ENCODE measurements at regions of chr10 and their contacts with region 1.

Region 1: DNA sequence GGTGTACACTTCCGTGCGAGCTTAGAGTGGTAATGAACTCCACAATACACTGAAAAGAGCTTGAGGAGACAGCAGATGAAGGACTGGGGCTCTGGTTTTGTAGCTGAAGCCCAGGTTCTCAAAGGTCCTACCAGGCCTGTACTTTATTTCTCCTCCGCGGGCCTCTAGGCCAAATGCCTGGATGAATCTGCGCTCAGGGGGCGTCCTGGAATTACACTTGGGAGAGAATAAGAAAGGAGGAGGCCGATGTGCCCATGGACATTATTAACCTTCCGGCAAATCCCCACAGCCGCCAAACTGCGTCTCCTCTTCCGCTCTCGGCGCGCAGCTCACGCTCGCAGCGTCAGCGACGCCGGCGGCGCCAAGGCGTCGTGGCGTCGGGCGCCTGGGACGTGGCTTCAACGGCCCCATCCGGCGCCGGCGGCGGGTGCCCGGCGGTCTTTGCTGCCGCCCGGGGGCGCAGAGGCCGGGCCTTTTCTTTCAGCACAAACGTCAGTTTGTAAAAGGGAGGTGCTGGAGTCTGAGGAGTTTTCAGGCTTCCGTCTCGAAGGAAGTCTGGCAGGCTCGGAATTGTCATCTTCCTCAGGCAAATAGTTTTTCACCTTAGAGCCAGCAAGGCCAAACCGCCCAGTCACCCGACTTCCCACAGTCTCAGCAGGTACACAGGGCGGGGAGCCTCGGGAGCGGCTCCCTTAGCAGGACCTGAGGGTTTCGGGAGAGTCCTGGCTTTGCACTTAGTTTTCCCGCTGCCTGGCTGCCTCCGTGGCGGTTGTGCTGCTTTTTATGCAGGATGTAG is at the start of gene CCDC7:
- DNase-seq: peak; percentile 83 to 90 (median 88)
- H3K4me3 ChIP-seq: peak within 1 kb of the TSS; percentile 89 to 92
- H3K4me3 Mint-ChIP-seq: peak within 1 kb of the TSS; percentile 91 to 99 (median 96)
- H3K27ac ChIP-seq: peak within 1 kb of the TSS; percentile 81
- H3K27ac Mint-ChIP-seq: peak within 1 kb of the TSS; percentile 97 to 100 (median 98)
- H3K4me1 ChIP-seq: peaks cover 20% of the 10 kb centered on the region
- H3K4me1 Mint-ChIP-seq: peaks cover 8 to 26% (median 16%) of the 10 kb centered on the region in 4 donors
- H3K27me3 ChIP-seq: no peaks in the 10 kb centered on the region
- H3K27me3 Mint-ChIP-seq: no peaks in the 10 kb centered on the region
- total RNA-seq, gene CCDC7: 70.3 to 90.5 TPM

Region 2: DNA sequence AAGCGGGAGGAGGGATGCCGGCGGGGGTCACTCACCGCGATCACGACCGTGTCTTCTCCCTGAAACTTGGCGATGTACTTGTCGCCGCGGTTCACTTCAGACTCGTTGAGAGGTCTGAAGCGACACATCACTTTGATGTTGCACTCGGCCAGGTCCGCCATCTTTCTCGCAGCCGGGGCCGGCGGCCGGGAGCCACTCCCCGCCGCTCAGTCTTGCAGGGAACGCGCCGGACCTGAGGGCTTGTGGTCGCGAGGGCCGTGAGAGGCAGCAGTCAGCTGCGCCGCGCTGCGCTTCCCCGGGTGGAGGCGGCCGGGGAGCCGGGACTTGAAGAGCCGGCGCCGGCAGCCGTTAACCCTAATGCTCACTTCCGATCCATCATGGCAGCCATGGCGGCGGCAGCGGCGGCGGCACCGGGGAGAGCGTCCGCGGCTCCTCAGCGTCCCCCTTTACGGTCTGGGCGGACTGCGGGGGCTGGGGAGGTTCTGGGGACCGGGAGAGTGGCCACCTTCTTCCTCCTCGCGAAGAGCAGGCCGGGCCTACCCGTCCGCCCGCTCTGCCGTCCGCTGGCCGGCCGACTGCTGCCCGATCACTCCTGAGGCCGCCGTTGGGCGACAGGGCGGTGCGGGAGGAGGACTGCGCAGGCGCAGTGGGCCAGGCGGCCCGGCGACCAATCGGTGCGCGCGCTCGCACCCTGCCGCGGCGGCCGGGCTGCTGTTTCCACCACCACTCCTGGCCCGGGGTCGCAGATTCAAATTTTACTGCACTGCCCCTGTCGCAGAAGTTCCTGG is 389.9 kb before region 1 on chr10 and contains the start of gene KIF5B:
- CTCF ChIA-PET with region 1: no interaction called
- POLR2A ChIA-PET with region 1: interaction called, 4 read pairs
- intact Hi-C with region 1: loop called (anchors 10 kb)
- DNase-seq: peak; percentile 81 to 92 (median 88)
- H3K4me3 ChIP-seq: peak within 1 kb of the TSS; percentile 88 to 93
- H3K4me3 Mint-ChIP-seq: peak within 1 kb of the TSS; percentile 95 to 99 (median 98)
- H3K27ac ChIP-seq: peak within 1 kb of the TSS; percentile 81
- H3K27ac Mint-ChIP-seq: peak within 1 kb of the TSS; percentile 94 to 97 (median 95)
- H3K4me1 ChIP-seq: peaks cover 49% of the 10 kb centered on the region
- H3K4me1 Mint-ChIP-seq: peaks cover 30 to 54% (median 44%) of the 10 kb centered on the region in 4 donors
- H3K27me3 ChIP-seq: no peaks in the 10 kb centered on the region
- H3K27me3 Mint-ChIP-seq: no peaks in the 10 kb centered on the region
- total RNA-seq, gene KIF5B: 54.8 to 55.6 TPM

Region 3: GRCh38 chr10:32190890-32191491 is 254.9 kb before region 1 on chr10:
- CTCF ChIA-PET with region 1: no interaction called
- POLR2A ChIA-PET with region 1: no interaction called
- intact Hi-C with region 1: loop called (anchors 2 kb)
- DNase-seq: peak in 4 of 5 donors; percentile 31 to 44 (median 40)
- H3K4me3 ChIP-seq: no peak overlapping the region
- H3K4me3 Mint-ChIP-seq: no peak overlapping the region
- H3K27ac ChIP-seq: no peak overlapping the region
- H3K27ac Mint-ChIP-seq: peak overlapping the region in 4 of 7 donors; percentile 5 to 59 (median 50)
- H3K4me1 ChIP-seq: no peaks in the 10 kb centered on the region
- H3K4me1 Mint-ChIP-seq: peaks cover 0 to 6% (median 3%) of the 10 kb centered on the region in 4 donors
- H3K27me3 ChIP-seq: no peaks in the 10 kb centered on the region
- H3K27me3 Mint-ChIP-seq: no peaks in the 10 kb centered on the region

Region 4: DNA sequence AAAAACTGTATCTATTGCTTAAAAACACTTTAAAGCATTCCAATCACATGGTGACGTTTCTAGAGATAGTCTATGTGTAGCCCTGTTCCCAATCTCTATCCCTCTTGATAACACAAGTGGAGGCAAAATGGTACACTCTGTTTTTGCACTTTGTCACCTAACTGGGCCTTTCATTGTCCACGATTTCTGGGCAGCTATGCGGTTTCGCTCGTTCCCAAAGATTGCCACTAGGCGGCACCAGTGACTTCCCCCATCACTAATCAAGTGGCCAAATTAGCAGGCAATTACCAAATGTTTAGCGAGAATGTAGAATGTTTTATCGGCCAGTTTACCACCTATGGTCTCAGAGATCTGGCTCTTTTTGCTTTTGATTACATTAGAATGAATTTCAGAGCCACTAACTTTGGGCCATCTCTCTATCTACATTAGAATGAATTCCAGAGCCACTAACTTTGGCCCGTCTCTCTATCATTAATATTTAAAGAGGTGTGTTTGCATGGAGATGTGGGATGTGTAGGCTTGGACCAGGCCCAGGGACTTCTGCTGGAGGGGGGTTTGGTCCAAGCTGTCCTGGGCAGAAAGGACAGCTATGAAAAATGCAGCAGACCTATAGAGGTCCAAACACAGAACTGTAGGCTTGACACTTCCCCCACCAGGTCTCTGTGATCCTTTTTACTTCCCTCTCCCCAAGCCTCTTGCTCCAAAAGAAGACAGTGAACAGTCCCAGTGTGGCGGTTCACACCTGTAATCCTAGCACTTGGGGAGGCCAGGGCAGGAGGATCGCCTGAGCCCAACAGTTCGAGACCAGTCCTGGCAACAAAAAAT is 189.1 kb before region 1 on chr10:
- CTCF ChIA-PET with region 1: interaction called, 6 read pairs
- POLR2A ChIA-PET with region 1: interaction called, 3 read pairs
- intact Hi-C with region 1: loop called (anchors 5 kb)
- DNase-seq: peak; percentile 62 to 67 (median 66)
- H3K4me3 ChIP-seq: no peak overlapping the region
- H3K4me3 Mint-ChIP-seq: peak overlapping the region in 3 of 8 donors; percentile 5 to 44 (median 20)
- H3K27ac ChIP-seq: no peak overlapping the region
- H3K27ac Mint-ChIP-seq: peak overlapping the region in 1 of 7 donors; percentile 46
- H3K4me1 ChIP-seq: peaks cover 7% of the 10 kb centered on the region
- H3K4me1 Mint-ChIP-seq: peaks cover 5 to 10% (median 7%) of the 10 kb centered on the region in 4 donors
- H3K27me3 ChIP-seq: no peaks in the 10 kb centered on the region
- H3K27me3 Mint-ChIP-seq: no peaks in the 10 kb centered on the region

Region 5: GRCh38 chr10:32459051-32459698 is 13.2 kb after region 1 on chr10:
- CTCF ChIA-PET with region 1: interaction called, 14 read pairs
- POLR2A ChIA-PET with region 1: interaction called, 72 read pairs
- intact Hi-C with region 1: loop called (anchors 1 kb)
- DNase-seq: peak; percentile 81 to 85 (median 82)
- H3K4me3 ChIP-seq: no peak overlapping the region
- H3K4me3 Mint-ChIP-seq: peak overlapping the region; percentile 27 to 81 (median 68)
- H3K27ac ChIP-seq: peak overlapping the region; percentile 62
- H3K27ac Mint-ChIP-seq: peak overlapping the region; percentile 48 to 93 (median 83)
- H3K4me1 ChIP-seq: peaks cover 43% of the 10 kb centered on the region
- H3K4me1 Mint-ChIP-seq: peaks cover 34 to 53% (median 49%) of the 10 kb centered on the region in 4 donors
- H3K27me3 ChIP-seq: no peaks in the 10 kb centered on the region
- H3K27me3 Mint-ChIP-seq: no peaks in the 10 kb centered on the region

Region 6: GRCh38 chr10:32795598-32796183 is 349.8 kb after region 1 on chr10:
- CTCF ChIA-PET with region 1: no interaction called
- POLR2A ChIA-PET with region 1: no interaction called
- intact Hi-C with region 1: loop called (anchors 10 kb)
- DNase-seq: peak in 4 of 5 donors; percentile 34 to 46 (median 35)
- H3K4me3 ChIP-seq: no peak overlapping the region
- H3K4me3 Mint-ChIP-seq: no peak overlapping the region
- H3K27ac ChIP-seq: no peak overlapping the region
- H3K27ac Mint-ChIP-seq: peak overlapping the region in 4 of 7 donors; percentile 1 to 47 (median 22)
- H3K4me1 ChIP-seq: no peaks in the 10 kb centered on the region
- H3K4me1 Mint-ChIP-seq: peaks cover 0 to 5% (median 2%) of the 10 kb centered on the region in 4 donors
- H3K27me3 ChIP-seq: no peaks in the 10 kb centered on the region
- H3K27me3 Mint-ChIP-seq: no peaks in the 10 kb centered on the region

Region 7: DNA sequence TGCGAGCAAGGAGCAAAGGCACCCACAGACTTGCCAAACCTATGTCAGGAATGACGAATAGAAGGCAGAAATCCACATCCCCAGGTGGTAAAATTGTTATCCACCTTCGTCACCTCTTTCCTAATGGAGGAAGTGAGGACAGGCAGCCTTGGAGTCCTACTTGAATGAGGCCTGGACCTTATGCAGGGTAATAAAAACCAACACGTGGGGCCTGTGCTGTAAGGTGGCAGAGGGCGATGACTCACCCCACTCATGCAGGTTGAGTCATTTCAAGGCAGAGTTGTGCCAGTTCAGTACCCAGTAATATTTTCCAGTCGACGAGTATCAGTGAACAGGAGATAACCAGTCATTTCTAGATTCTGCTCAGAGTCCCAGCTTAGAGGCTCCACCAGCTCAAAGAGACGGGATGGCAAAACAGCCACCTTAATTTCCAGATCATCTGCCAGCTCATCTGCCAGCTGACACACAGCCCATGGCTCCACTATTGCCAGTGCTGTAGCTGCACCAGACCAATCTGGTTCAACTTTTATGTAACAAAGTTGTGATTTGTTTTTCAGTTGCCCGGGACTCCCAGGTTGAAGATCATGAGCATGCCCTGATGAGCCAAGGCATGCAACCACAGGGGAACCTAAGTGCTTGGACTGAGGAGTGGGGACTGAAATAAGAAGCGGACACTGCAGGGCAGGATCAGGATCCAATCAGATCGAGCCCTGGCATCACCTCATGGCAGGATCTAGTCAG is 688.2 kb after region 1 on chr10:
- CTCF ChIA-PET with region 1: no interaction called
- POLR2A ChIA-PET with region 1: interaction called, 7 read pairs
- intact Hi-C with region 1: loop called (anchors 5 kb)
- DNase-seq: peak; percentile 59 to 96 (median 73)
- H3K4me3 ChIP-seq: no peak overlapping the region
- H3K4me3 Mint-ChIP-seq: peak overlapping the region; percentile 13 to 84 (median 62)
- H3K27ac ChIP-seq: peak overlapping the region; percentile 84
- H3K27ac Mint-ChIP-seq: peak overlapping the region; percentile 89 to 100 (median 100)
- H3K4me1 ChIP-seq: peaks cover 98% of the 10 kb centered on the region
- H3K4me1 Mint-ChIP-seq: peaks cover 71 to 97% (median 85%) of the 10 kb centered on the region in 4 donors
- H3K27me3 ChIP-seq: no peaks in the 10 kb centered on the region
- H3K27me3 Mint-ChIP-seq: no peaks in the 10 kb centered on the region

Measured in CD4-positive, alpha-beta memory T cell (primary cell).